HCT116 (cell line): ENCODE measurements at regions of chr15 and their contacts with region 1.

Region 1: GRCh38 chr15:72722071-72722696 is 36.2 kb downstream of the BBS4 start:
- DNase-seq: peak; percentile 55
- ATAC-seq: peak; percentile 90
- H3K4me3 ChIP-seq: no peak overlapping the region
- H3K27ac ChIP-seq: no peak overlapping the region
- H3K4me1 ChIP-seq: no peaks in the 10 kb centered on the region
- H3K27me3 ChIP-seq: no peaks in the 10 kb centered on the region
- CTCF ChIP-seq: peak; percentile 46 to 95 (median 79); a peak in 5 of 6 replicates
- POLR2A ChIP-seq: no peak
- RAD21 ChIP-seq: peak; percentile 69

Region 2: GRCh38 chr15:72706266-72706665 is 15.9 kb before region 1 on chr15:
- CTCF ChIA-PET with region 1: interaction called, 13 read pairs
- POLR2A ChIA-PET with region 1: no interaction called
- RAD21 ChIA-PET with region 1: no interaction called
- intact Hi-C with region 1: no loop called
- DNase-seq: no peak
- ATAC-seq: peak; percentile 46; the same call in 1 of the 2 replicates
- H3K4me3 ChIP-seq: no peak overlapping the region
- H3K27ac ChIP-seq: no peak overlapping the region
- H3K4me1 ChIP-seq: peaks cover 0 to 7% of the 10 kb centered on the region in 2 experiments; a peak in 2 of 4 replicates
- H3K27me3 ChIP-seq: no peaks in the 10 kb centered on the region
- CTCF ChIP-seq: no peak
- POLR2A ChIP-seq: no peak
- RAD21 ChIP-seq: no peak

Region 3: GRCh38 chr15:72737061-72737460 is 14.9 kb after region 1 on chr15:
- CTCF ChIA-PET with region 1: interaction called, 17 read pairs
- POLR2A ChIA-PET with region 1: no interaction called
- RAD21 ChIA-PET with region 1: no interaction called
- intact Hi-C with region 1: no loop called
- DNase-seq: no peak
- ATAC-seq: no peak
- H3K4me3 ChIP-seq: no peak overlapping the region
- H3K27ac ChIP-seq: no peak overlapping the region
- H3K4me1 ChIP-seq: no peaks in the 10 kb centered on the region
- H3K27me3 ChIP-seq: no peaks in the 10 kb centered on the region
- CTCF ChIP-seq: no peak
- POLR2A ChIP-seq: no peak
- RAD21 ChIP-seq: no peak

Region 4: GRCh38 chr15:72770673-72771328 is 48.6 kb after region 1 on chr15:
- CTCF ChIA-PET with region 1: no interaction called
- POLR2A ChIA-PET with region 1: no interaction called
- RAD21 ChIA-PET with region 1: no interaction called
- intact Hi-C with region 1: no loop called
- DNase-seq: no peak
- ATAC-seq: peak; percentile 53
- H3K4me3 ChIP-seq: no peak overlapping the region
- H3K27ac ChIP-seq: no peak overlapping the region
- H3K4me1 ChIP-seq: no peaks in the 10 kb centered on the region
- H3K27me3 ChIP-seq: no peaks in the 10 kb centered on the region
- CTCF ChIP-seq: peak in 2 of 3 experiments; percentile 31 to 44; a peak in 4 of 6 replicates
- POLR2A ChIP-seq: no peak
- RAD21 ChIP-seq: no peak

Region 5: GRCh38 chr15:73081321-73081958 is 359.3 kb after region 1 on chr15:
- CTCF ChIA-PET with region 1: interaction called, 21 read pairs
- POLR2A ChIA-PET with region 1: no interaction called
- RAD21 ChIA-PET with region 1: interaction called in 1 of 2 experiments, 4 read pairs
- intact Hi-C with region 1: loop called (anchors 1 kb)
- DNase-seq: peak; percentile 54
- ATAC-seq: peak; percentile 58
- H3K4me3 ChIP-seq: no peak overlapping the region
- H3K27ac ChIP-seq: no peak overlapping the region
- H3K4me1 ChIP-seq: no peaks in the 10 kb centered on the region
- H3K27me3 ChIP-seq: no peaks in the 10 kb centered on the region
- CTCF ChIP-seq: peak; percentile 49 to 79 (median 69); a peak in 5 of 6 replicates
- POLR2A ChIP-seq: no peak
- RAD21 ChIP-seq: peak; percentile 86

Region 6: GRCh38 chr15:73240866-73241499 is 518.8 kb after region 1 on chr15:
- CTCF ChIA-PET with region 1: interaction called, 13 read pairs
- POLR2A ChIA-PET with region 1: no interaction called
- RAD21 ChIA-PET with region 1: interaction called in 1 of 2 experiments, 3 read pairs
- intact Hi-C with region 1: loop called (anchors 10 kb)
- DNase-seq: peak; percentile 61
- ATAC-seq: peak; percentile 75
- H3K4me3 ChIP-seq: no peak overlapping the region
- H3K27ac ChIP-seq: no peak overlapping the region
- H3K4me1 ChIP-seq: no peaks in the 10 kb centered on the region
- H3K27me3 ChIP-seq: no peaks in the 10 kb centered on the region
- CTCF ChIP-seq: peak; percentile 62 to 88 (median 78); a peak in 5 of 6 replicates
- POLR2A ChIP-seq: no peak
- RAD21 ChIP-seq: peak; percentile 70

Region 7: GRCh38 chr15:73265536-73266153 is 543.5 kb after region 1 on chr15:
- CTCF ChIA-PET with region 1: interaction called, 12 read pairs
- POLR2A ChIA-PET with region 1: no interaction called
- RAD21 ChIA-PET with region 1: no interaction called
- intact Hi-C with region 1: loop called (anchors 5 kb)
- DNase-seq: peak; percentile 42
- ATAC-seq: peak; percentile 91
- H3K4me3 ChIP-seq: no peak overlapping the region
- H3K27ac ChIP-seq: no peak overlapping the region
- H3K4me1 ChIP-seq: no peaks in the 10 kb centered on the region
- H3K27me3 ChIP-seq: no peaks in the 10 kb centered on the region
- CTCF ChIP-seq: peak; percentile 48 to 94 (median 84); a peak in 5 of 6 replicates
- POLR2A ChIP-seq: no peak
- RAD21 ChIP-seq: peak; percentile 41

Region 8: GRCh38 chr15:73273181-73274002 is 551.2 kb after region 1 on chr15:
- CTCF ChIA-PET with region 1: interaction called, 23 read pairs
- POLR2A ChIA-PET with region 1: no interaction called
- RAD21 ChIA-PET with region 1: no interaction called
- intact Hi-C with region 1: loop called (anchors 5 kb)
- DNase-seq: peak; percentile 15
- ATAC-seq: peak; percentile 97
- H3K4me3 ChIP-seq: no peak overlapping the region
- H3K27ac ChIP-seq: no peak overlapping the region
- H3K4me1 ChIP-seq: no peaks in the 10 kb centered on the region
- H3K27me3 ChIP-seq: no peaks in the 10 kb centered on the region
- CTCF ChIP-seq: peak; percentile 53 to 86 (median 85); a peak in 5 of 6 replicates
- POLR2A ChIP-seq: no peak
- RAD21 ChIP-seq: peak; percentile 66

Region 9: GRCh38 chr15:73927476-73928240 is 1205.5 kb after region 1 on chr15:
- CTCF ChIA-PET with region 1: no interaction called
- POLR2A ChIA-PET with region 1: no interaction called
- RAD21 ChIA-PET with region 1: no interaction called
- intact Hi-C with region 1: no loop called
- DNase-seq: peak; percentile 15
- ATAC-seq: peak; percentile 83
- H3K4me3 ChIP-seq: peak overlapping the region; percentile 57 to 77
- H3K27ac ChIP-seq: peak overlapping the region; percentile 94
- H3K4me1 ChIP-seq: peaks cover 27 to 46% of the 10 kb centered on the region in 2 experiments
- H3K27me3 ChIP-seq: no peaks in the 10 kb centered on the region
- CTCF ChIP-seq: peak; percentile 61 to 76 (median 74)
- POLR2A ChIP-seq: peak; percentile 49
- RAD21 ChIP-seq: no peak